ENCODE measurements at regions of chr17 and their contacts with region 1.

Region 1: GRCh38 chr17:47621293-47622178 is 28.2 kb upstream of the KPNB1 start:
- DNase-seq: no peak
- H3K4me3 Mint-ChIP-seq: no peak overlapping the region
- H3K27ac Mint-ChIP-seq: peak overlapping the region; percentile 90
- H3K4me1 Mint-ChIP-seq: peaks cover 15% of the 10 kb centered on the region
- H3K27me3 Mint-ChIP-seq: no peaks in the 10 kb centered on the region

Region 2: GRCh38 chr17:46929413-46929812 is 692.1 kb before region 1 on chr17:
- intact Hi-C with region 1: loop called (anchors 5 kb)
- DNase-seq: no peak
- H3K4me3 Mint-ChIP-seq: no peak overlapping the region
- H3K27ac Mint-ChIP-seq: no peak overlapping the region
- H3K4me1 Mint-ChIP-seq: peaks cover 29% of the 10 kb centered on the region
- H3K27me3 Mint-ChIP-seq: no peaks in the 10 kb centered on the region

Region 3: DNA sequence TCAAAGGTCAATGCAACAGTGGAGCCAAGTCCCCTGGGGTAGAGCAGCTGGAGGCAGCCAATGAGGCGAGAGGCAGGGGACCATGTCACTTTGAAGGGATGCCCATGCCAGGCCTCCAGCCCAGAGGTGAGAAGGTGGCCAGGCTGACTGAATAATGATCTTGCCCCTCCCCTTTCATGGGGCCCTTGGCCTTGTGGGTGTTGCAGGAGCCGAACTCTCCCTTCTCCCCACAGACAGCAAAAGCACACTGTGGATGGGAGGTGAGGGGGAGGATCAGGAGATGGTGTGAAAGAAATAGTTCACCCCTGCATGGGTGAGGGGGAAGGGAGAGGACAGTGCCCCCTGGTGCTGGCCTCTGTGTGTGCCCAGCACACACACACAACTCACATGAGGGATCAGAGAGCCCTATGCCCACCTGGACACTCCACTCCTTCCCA is 95.7 kb after region 1 on chr17:
- intact Hi-C with region 1: no loop called
- DNase-seq: peak; percentile 73
- H3K4me3 Mint-ChIP-seq: peak overlapping the region; percentile 76
- H3K27ac Mint-ChIP-seq: peak overlapping the region; percentile 93
- H3K4me1 Mint-ChIP-seq: peaks cover 77% of the 10 kb centered on the region
- H3K27me3 Mint-ChIP-seq: no peaks in the 10 kb centered on the region

Measured in activated CD4-positive, alpha-beta T cell treated with anti-CD3 and anti-CD28 coated beads, Interleukin-2, amount 10 ng/mL, durations not matched to agents 24 days and 14 days (primary cell).